Heart left ventricle (tissue), 16 donors: ENCODE measurements at regions of chr4 and their contacts with region 1.

Region 1: GRCh38 chr4:4488405-4489404 is 53.1 kb downstream of the STX18 start:
- DNase-seq: peak in 4 of 5 donors; percentile 35 to 55 (median 44)
- ATAC-seq: peak; percentile 82 to 92 (median 86)
- H3K4me3 ChIP-seq: no peak overlapping the region
- H3K27ac ChIP-seq: no peak overlapping the region
- H3K4me1 ChIP-seq: peaks cover 0 to 19% (median 0%) of the 10 kb centered on the region in 12 donors
- H3K27me3 ChIP-seq: no peaks in the 10 kb centered on the region
- CTCF ChIP-seq: peak; percentile 79 to 94 (median 88)
- POLR2A ChIP-seq: no peak

Region 2: DNA sequence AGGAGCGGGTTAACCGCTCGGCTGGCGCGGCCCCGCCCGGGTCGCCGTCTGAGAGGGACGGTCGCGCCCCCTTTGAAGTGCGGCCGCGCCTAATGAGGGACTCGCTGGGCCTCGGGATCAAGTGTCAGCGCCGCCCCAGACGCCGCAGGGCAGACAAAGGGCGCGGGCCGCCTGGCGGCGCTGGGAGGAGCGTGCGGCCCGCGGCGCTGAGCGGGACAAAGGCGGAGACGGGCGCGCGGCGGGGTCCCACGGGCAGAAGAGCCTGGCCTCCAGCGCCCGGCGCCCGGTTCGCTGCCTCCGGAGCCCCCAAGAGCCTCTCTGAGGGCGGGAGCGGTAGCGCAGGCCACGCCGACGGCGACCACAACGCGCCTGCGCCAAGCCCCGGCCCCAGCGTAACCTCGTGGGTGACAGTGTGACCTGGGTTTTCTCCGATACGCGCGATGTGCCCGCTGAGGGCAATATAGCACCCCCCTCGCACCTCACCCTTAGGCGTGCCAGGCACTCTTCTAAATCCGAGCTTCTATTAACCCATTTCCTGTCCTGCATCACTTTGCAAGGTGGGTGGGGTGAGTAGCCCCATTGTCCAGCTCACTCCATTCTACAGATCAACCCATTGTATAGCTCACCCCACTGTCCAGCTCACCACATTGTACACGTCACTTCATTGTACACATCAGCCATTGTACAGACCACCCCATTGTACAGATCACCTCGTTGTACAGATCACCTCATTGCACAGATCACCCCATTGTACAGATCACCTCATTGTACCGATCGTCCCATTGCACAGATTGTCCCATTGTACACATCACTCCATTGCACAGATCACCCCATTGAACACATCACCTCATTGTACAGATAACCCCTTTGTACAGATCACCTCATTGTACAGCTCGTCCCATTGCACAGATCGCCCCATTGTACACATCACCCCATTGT is 86.8 kb after region 1 on chr4:
- intact Hi-C with region 1: no loop called
- DNase-seq: peak; percentile 48 to 80 (median 73)
- ATAC-seq: peak; percentile 44 to 93 (median 89)
- H3K4me3 ChIP-seq: peak overlapping the region; percentile 55 to 95 (median 64)
- H3K27ac ChIP-seq: peak overlapping the region; percentile 27 to 86 (median 70)
- H3K4me1 ChIP-seq: peaks cover 0 to 8% (median 0%) of the 10 kb centered on the region in 12 donors
- H3K27me3 ChIP-seq: no peaks in the 10 kb centered on the region
- CTCF ChIP-seq: peak in 11 of 12 donors; percentile 34 to 71 (median 50)
- POLR2A ChIP-seq: peak in 1 of 2 donors; percentile 10

Region 3: DNA sequence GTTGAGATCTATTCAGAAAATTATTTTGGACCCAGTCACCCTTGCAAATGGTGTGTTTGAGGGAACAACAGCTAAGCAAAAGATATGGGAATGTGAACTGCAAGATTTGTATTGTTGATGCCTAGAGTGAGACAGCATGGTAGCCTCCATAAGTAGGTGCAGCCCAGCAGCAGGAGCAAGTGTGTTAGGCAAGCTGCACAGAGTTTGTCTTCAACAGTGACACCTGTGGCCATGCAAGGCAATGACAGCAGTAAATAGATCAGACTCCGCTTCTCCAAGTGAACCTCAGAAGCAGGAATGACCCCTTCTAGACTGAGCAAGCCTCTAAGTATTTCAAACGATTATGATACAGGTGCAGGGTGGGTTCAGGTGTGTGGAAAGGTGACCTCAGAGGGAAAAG is 237.3 kb after region 1 on chr4:
- intact Hi-C with region 1: no loop called
- DNase-seq: no peak
- ATAC-seq: no peak
- H3K4me3 ChIP-seq: no peak overlapping the region
- H3K27ac ChIP-seq: no peak overlapping the region
- H3K4me1 ChIP-seq: no peaks in the 10 kb centered on the region
- H3K27me3 ChIP-seq: no peaks in the 10 kb centered on the region
- CTCF ChIP-seq: no peak
- POLR2A ChIP-seq: no peak

Region 4: GRCh38 chr4:4869731-4870571 is 381.2 kb after region 1 on chr4:
- intact Hi-C with region 1: loop called in 5 of 10 experiments (anchors 5 to 10 kb)
- DNase-seq: peak in 1 of 5 donors; percentile 20
- ATAC-seq: no peak
- H3K4me3 ChIP-seq: no peak overlapping the region
- H3K27ac ChIP-seq: no peak overlapping the region
- H3K4me1 ChIP-seq: peaks cover 0 to 51% (median 20%) of the 10 kb centered on the region in 12 donors
- H3K27me3 ChIP-seq: peaks cover 84 to 100% (median 98%) of the 10 kb centered on the region in 9 donors
- CTCF ChIP-seq: no peak
- POLR2A ChIP-seq: no peak

Region 5: DNA sequence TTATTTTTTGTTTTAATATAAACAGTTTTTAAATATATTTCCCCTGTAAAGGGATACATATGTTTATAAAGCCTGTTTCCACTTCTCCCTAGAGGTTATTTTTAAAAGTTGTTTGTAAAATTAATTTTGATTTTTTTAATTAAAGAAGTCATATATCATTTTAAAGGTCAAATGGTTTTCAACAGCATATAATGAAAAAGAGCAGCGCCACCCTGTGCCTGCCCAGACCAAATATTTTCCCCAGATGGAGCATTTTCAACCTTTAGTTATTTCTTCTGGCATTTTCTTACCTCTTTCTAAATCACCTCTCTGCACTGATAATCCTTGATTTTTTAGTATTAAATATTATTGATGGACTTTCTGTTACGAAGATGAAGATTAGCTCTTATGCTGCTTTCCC is 391.8 kb after region 1 on chr4:
- intact Hi-C with region 1: loop called in 9 of 10 experiments (anchors 5 to 10 kb)
- DNase-seq: no peak
- ATAC-seq: no peak
- H3K4me3 ChIP-seq: no peak overlapping the region
- H3K27ac ChIP-seq: no peak overlapping the region
- H3K4me1 ChIP-seq: no peaks in the 10 kb centered on the region
- H3K27me3 ChIP-seq: peaks cover 0 to 78% (median 36%) of the 10 kb centered on the region in 9 donors
- CTCF ChIP-seq: peak in 8 of 12 donors; percentile 14 to 51 (median 36)
- POLR2A ChIP-seq: no peak

Region 6: GRCh38 chr4:4995103-4995907 is 506.6 kb after region 1 on chr4:
- intact Hi-C with region 1: loop called in 2 of 10 experiments (anchors 2 to 5 kb)
- DNase-seq: peak; percentile 61 to 85 (median 71)
- ATAC-seq: peak; percentile 45 to 75 (median 65)
- H3K4me3 ChIP-seq: no peak overlapping the region
- H3K27ac ChIP-seq: no peak overlapping the region
- H3K4me1 ChIP-seq: peaks cover 0 to 19% (median 2%) of the 10 kb centered on the region in 12 donors
- H3K27me3 ChIP-seq: peaks cover 0 to 9% (median 6%) of the 10 kb centered on the region in 9 donors
- CTCF ChIP-seq: peak; percentile 82 to 93 (median 91)
- POLR2A ChIP-seq: no peak

Region 7: DNA sequence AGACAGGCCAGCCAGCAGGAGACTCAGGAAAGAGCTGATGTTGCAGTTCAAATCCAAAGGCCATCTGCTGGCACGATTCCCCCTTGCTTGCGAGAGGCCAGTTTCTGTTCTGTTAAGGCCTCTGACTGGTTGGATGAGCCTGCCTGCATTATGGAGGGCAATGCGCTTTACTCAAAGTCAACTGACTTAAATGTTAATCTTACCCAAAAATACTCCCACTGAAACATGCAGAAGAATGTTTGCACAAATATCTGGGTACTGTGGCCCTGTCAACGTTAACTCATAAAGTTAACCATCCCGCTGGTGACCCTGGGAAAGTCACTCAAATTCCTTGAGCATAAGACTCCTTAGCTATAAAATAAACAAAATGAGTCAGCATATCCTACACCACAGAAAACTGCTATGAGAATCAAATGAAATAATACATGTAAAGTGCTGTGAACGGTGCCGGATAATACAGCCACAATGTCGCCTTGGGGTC is 893.3 kb after region 1 on chr4:
- intact Hi-C with region 1: no loop called
- DNase-seq: no peak
- ATAC-seq: no peak
- H3K4me3 ChIP-seq: no peak overlapping the region
- H3K27ac ChIP-seq: no peak overlapping the region
- H3K4me1 ChIP-seq: peaks cover 0 to 9% (median 0%) of the 10 kb centered on the region in 12 donors
- H3K27me3 ChIP-seq: no peaks in the 10 kb centered on the region
- CTCF ChIP-seq: no peak
- POLR2A ChIP-seq: no peak

Region 8: GRCh38 chr4:5812506-5813229 is 1324.0 kb after region 1 on chr4:
- intact Hi-C with region 1: loop called in 3 of 10 experiments (anchors 5 to 10 kb)
- DNase-seq: peak in 1 of 5 donors; percentile 32
- ATAC-seq: peak; percentile 58 to 83 (median 65)
- H3K4me3 ChIP-seq: no peak overlapping the region
- H3K27ac ChIP-seq: no peak overlapping the region
- H3K4me1 ChIP-seq: no peaks in the 10 kb centered on the region
- H3K27me3 ChIP-seq: no peaks in the 10 kb centered on the region
- CTCF ChIP-seq: peak; percentile 56 to 76 (median 71)
- POLR2A ChIP-seq: no peak